Activated naive CD4-positive, alpha-beta T cell treated with anti-CD3 and anti-CD28 coated beads for 36 hours (primary cell): ENCODE measurements at regions of chr18 and their contacts with region 1.

Region 1: DNA sequence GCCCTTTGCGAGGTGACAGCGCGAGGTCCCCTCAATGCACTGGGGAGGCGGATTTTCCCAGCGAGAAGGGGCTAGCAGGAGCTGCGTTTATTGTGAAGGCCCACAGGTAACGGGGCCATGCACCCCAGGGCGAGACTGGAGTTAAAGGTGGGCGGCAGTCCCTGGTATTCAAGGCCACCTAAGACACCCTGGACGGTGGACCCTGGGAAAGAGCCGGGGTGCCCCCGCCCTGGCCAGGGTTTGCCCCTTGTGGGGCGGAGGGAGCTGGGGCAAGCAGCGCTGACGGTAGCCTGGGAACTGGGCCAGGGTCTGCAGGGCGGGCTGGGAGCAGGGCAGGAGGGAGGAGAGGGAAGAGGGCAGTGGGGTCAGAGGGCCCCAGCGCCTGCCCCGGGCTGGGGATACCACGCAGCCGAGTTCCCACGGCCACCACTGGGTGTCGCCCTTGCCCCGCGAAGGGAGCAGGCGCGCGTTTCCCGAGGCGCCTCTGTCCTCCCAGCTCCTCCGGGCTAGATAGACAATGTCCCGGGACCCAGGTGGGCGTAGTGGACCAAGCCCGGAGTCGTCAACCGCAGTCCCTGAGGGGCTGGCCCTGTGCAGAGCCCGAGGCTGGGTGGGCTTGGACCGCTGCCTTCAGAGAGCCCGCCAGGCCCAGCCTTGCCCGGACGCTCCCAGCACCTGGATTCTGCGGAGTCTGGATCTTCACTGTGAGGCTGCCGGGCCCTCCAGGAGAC is 80.2 kb downstream of the SMAD4 start:
- DNase-seq: peak; percentile 76
- H3K4me3 Mint-ChIP-seq: no peak overlapping the region
- H3K27ac Mint-ChIP-seq: no peak overlapping the region
- H3K4me1 Mint-ChIP-seq: peaks cover 17% of the 10 kb centered on the region
- H3K27me3 Mint-ChIP-seq: no peaks in the 10 kb centered on the region

Region 2: DNA sequence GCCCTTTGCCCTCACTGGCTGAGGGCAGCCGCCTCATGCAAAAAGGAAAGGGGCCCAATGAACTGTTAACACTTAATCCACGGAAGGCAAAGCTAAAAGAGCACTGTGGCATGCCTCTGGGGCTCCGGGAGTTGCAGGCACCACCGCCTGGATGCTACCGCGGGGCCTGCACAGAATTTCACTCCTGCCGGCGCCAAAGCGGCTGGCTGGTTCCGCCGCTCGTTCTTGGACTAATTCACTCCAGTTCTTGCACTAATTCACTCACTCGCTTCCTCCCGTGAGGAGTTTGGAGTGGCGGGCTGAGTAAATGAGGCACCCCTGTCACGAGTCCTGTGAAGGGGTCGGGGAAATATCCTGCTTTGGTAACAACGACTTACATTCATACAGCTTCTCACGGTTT is 564.3 kb before region 1 on chr18:
- CTCF ChIA-PET with region 1: no interaction called
- intact Hi-C with region 1: no loop called
- DNase-seq: no peak
- H3K4me3 Mint-ChIP-seq: no peak overlapping the region
- H3K27ac Mint-ChIP-seq: no peak overlapping the region
- H3K4me1 Mint-ChIP-seq: no peaks in the 10 kb centered on the region
- H3K27me3 Mint-ChIP-seq: peaks cover 5% of the 10 kb centered on the region

Region 3: DNA sequence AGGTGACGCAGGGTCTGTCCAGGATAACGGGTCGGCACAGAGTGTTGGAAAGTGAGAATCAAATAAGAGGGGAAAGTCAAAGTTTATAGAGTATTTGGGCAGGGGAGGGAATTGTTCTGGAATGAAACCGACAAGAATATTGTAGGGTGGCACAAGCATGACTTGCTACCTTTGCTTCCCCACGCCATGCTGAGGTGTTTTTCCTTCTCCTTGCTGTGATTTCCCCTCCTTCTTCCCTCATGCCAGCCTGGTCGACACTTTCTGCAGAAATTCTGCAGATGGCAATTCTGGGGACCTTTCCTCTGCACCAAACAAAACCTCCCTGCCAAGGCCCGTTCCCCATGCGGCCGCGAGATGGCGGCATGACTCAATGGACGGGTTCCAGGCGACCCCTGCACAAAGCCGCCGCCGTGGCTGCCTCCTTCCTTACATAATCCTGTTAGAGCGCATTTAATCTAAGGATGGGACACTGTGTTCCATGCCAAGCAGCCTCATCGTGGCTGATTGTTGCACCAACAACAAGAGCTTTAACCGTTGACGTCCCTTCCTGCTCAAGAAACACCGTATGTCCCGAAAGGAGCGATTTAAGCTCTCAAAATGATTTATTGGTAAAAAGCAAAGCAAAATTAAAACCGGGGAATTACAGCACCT is 290.4 kb before region 1 on chr18 and contains the start of gene MRO:
- CTCF ChIA-PET with region 1: interaction called, 7 read pairs
- intact Hi-C with region 1: loop called (anchors 1 kb)
- DNase-seq: peak; percentile 83
- H3K4me3 Mint-ChIP-seq: no peak within 1 kb of the TSS
- H3K27ac Mint-ChIP-seq: no peak within 1 kb of the TSS
- H3K4me1 Mint-ChIP-seq: no peaks in the 10 kb centered on the region
- H3K27me3 Mint-ChIP-seq: peaks cover 6% of the 10 kb centered on the region
- total RNA-seq, gene MRO: not detected

Region 4: GRCh38 chr18:51188024-51188701 is 77.9 kb after region 1 on chr18:
- CTCF ChIA-PET with region 1: interaction called, 10 read pairs
- intact Hi-C with region 1: no loop called
- DNase-seq: no peak
- H3K4me3 Mint-ChIP-seq: peak overlapping the region; percentile 39
- H3K27ac Mint-ChIP-seq: peak overlapping the region; percentile 46
- H3K4me1 Mint-ChIP-seq: peaks cover 76% of the 10 kb centered on the region
- H3K27me3 Mint-ChIP-seq: no peaks in the 10 kb centered on the region

Region 5: DNA sequence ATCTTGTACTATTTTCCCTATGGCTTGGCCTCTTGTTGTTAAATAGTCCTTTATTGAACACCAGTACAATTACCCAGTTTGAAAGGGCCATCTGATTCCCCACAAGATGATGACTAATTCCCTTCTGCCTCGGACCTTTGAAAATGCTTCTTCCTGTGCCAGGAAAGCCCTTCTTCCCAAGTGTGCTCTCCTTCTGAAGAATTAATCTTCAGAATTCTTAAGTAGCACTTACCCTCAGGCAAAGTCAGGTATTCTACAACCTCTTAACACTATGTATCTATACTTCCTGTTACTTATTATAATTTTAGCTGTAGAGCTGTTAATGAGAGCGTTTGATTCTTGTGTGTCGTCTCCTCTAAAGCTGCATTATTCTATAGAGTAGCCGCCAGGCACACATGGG is 115.8 kb after region 1 on chr18:
- CTCF ChIA-PET with region 1: no interaction called
- intact Hi-C with region 1: no loop called
- DNase-seq: no peak
- H3K4me3 Mint-ChIP-seq: no peak overlapping the region
- H3K27ac Mint-ChIP-seq: no peak overlapping the region
- H3K4me1 Mint-ChIP-seq: no peaks in the 10 kb centered on the region
- H3K27me3 Mint-ChIP-seq: no peaks in the 10 kb centered on the region

Region 6: GRCh38 chr18:51383116-51383515 is 272.9 kb after region 1 on chr18:
- CTCF ChIA-PET with region 1: interaction called, 10 read pairs
- intact Hi-C with region 1: loop called (anchors 2 kb)
- DNase-seq: no peak
- H3K4me3 Mint-ChIP-seq: no peak overlapping the region
- H3K27ac Mint-ChIP-seq: no peak overlapping the region
- H3K4me1 Mint-ChIP-seq: no peaks in the 10 kb centered on the region
- H3K27me3 Mint-ChIP-seq: peaks cover 3% of the 10 kb centered on the region

Region 7: GRCh38 chr18:51668101-51668500 is 557.9 kb after region 1 on chr18:
- CTCF ChIA-PET with region 1: interaction called, 6 read pairs
- intact Hi-C with region 1: loop called (anchors 5 kb)
- DNase-seq: peak; percentile 75
- H3K4me3 Mint-ChIP-seq: no peak overlapping the region
- H3K27ac Mint-ChIP-seq: no peak overlapping the region
- H3K4me1 Mint-ChIP-seq: no peaks in the 10 kb centered on the region
- H3K27me3 Mint-ChIP-seq: peaks cover 29% of the 10 kb centered on the region